PC-3 (cell line): ENCODE measurements at regions of chr1 and their contacts with region 1.

Region 1: GRCh38 chr1:100132566-100133477 is at the starts of genes SASS6 and TRMT13:
- DNase-seq: peak; percentile 97
- ATAC-seq: peak; percentile 94
- H3K4me3 ChIP-seq: peak within 1 kb of the TSS; percentile 77
- H3K27ac ChIP-seq: peak within 1 kb of the TSS; percentile 59
- H3K4me1 ChIP-seq: peaks cover 29% of the 10 kb centered on the region
- H3K27me3 ChIP-seq: no peaks in the 10 kb centered on the region
- CTCF ChIP-seq: no peak
- total RNA-seq, gene SASS6: 9.0 and 9.2 TPM in 2 replicates
- total RNA-seq, gene TRMT13: 6.7 and 9.4 TPM in 2 replicates

Region 2: DNA sequence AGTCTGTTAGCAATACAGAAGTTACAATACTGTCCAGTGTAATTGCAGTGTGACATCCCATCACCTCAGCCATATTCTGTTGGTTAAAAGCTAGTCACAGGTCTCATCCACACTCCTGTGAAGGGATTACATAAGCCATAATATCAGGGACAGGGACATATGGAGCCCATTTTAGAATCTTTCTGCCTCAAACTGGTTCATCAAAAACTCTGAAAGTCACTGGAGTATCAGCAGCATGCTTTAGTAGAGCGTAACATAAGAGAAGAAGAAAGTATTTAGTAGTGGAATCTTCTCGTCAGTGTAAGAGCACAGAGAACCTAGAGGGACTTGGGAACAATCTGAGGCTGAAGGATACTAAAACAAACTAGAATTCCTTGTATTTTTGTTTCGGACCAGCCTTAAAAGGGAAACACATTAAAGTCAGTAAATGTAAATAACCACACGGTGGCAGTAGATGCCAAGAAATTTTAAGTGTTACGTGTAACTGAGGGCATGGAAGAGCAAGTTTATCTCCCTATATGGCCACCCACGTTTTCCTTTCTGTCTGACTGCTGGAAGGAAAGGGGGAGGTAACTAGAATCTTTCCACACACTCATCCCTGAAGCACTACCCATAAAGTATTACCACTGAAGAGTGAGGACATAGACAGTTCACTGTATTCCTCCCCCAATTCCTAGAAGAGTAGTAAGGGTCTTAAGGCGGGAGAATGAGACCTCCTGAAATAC is 324.3 kb before region 1 on chr1:
- CTCF ChIA-PET with region 1: no interaction called
- POLR2A ChIA-PET with region 1: no interaction called
- intact Hi-C with region 1: loop called (anchors 5 kb)
- DNase-seq: peak; percentile 93
- ATAC-seq: peak; percentile 91
- H3K4me3 ChIP-seq: peak overlapping the region; percentile 46
- H3K27ac ChIP-seq: no peak overlapping the region
- H3K4me1 ChIP-seq: peaks cover 10% of the 10 kb centered on the region; the same call in 1 of the 2 replicates
- H3K27me3 ChIP-seq: peaks cover 24% of the 10 kb centered on the region
- CTCF ChIP-seq: peak; percentile 76

Region 3: DNA sequence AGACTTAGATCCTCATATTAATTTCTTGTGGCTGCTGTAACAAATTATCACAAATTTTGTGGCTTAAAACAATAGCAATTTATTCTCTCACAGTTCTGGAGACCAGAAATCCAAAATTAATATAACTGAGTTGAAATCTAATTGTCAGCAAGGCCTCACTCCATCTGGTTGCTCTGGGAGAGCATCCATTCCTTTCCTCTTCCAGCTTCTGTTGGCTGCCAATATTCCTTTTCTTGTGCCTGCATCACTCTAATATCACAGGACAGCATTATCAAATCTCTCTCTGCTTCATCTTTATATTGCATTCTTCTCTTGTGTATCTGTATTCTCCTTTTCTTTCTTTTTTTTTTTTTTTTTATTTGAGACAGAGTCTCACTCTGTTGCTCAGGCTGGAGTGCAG is 153.7 kb before region 1 on chr1:
- CTCF ChIA-PET with region 1: no interaction called
- POLR2A ChIA-PET with region 1: no interaction called
- intact Hi-C with region 1: no loop called
- DNase-seq: no peak
- ATAC-seq: no peak
- H3K4me3 ChIP-seq: no peak overlapping the region
- H3K27ac ChIP-seq: no peak overlapping the region
- H3K4me1 ChIP-seq: peaks cover 9% of the 10 kb centered on the region
- H3K27me3 ChIP-seq: no peaks in the 10 kb centered on the region
- CTCF ChIP-seq: no peak

Region 4: DNA sequence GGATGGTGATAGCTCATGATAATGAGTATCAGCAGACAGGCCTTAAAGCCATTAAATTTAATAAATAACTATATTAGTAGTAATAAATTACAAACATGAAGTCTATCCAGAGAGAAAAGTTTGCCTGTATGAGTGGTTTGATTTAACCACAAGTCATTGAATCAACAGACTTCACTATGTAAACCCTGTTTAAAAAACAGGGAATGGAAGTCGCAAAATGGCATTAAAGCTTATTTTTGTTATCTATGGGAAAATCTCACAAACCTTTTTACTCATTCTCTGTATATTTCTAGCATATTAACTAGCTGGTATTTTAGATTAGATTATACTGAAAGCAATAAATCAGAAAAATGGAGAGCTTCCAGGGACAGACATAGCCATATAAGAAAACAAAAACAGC is 45.4 kb before region 1 on chr1:
- CTCF ChIA-PET with region 1: no interaction called
- POLR2A ChIA-PET with region 1: no interaction called
- intact Hi-C with region 1: loop called (anchors 5 kb)
- DNase-seq: no peak
- ATAC-seq: peak; percentile 58
- H3K4me3 ChIP-seq: no peak overlapping the region
- H3K27ac ChIP-seq: no peak overlapping the region
- H3K4me1 ChIP-seq: no peaks in the 10 kb centered on the region
- H3K27me3 ChIP-seq: no peaks in the 10 kb centered on the region
- CTCF ChIP-seq: no peak